Heart left ventricle (tissue), 16 donors: ENCODE measurements at regions of chr2 and their contacts with region 1.

Region 1: DNA sequence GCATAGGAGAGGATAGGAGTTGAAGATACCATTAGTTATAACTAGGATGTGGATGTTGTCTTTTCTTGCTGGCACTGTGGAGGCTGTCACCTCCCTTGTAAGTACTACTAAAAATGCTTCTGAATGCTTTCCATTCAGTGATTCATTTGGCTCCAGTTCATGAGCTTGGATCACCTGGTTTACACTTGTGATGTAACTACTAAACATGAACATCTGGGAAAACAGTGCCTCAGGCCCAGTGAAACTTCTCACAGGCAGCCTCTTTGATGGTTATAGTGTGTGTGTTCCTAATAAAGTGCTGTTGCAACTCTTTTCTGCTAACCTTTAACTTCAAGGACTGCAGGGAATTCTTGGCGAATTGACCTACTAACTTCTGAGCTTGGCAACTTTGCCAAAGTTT is 13.0 kb upstream of the SLC9A2 start:
- DNase-seq: no peak
- ATAC-seq: no peak
- H3K4me3 ChIP-seq: no peak overlapping the region
- H3K27ac ChIP-seq: no peak overlapping the region
- H3K4me1 ChIP-seq: peaks cover 0 to 7% (median 0%) of the 10 kb centered on the region in 12 donors
- H3K27me3 ChIP-seq: peaks cover 0 to 5% (median 0%) of the 10 kb centered on the region in 9 donors
- CTCF ChIP-seq: no peak
- POLR2A ChIP-seq: no peak

Region 2: DNA sequence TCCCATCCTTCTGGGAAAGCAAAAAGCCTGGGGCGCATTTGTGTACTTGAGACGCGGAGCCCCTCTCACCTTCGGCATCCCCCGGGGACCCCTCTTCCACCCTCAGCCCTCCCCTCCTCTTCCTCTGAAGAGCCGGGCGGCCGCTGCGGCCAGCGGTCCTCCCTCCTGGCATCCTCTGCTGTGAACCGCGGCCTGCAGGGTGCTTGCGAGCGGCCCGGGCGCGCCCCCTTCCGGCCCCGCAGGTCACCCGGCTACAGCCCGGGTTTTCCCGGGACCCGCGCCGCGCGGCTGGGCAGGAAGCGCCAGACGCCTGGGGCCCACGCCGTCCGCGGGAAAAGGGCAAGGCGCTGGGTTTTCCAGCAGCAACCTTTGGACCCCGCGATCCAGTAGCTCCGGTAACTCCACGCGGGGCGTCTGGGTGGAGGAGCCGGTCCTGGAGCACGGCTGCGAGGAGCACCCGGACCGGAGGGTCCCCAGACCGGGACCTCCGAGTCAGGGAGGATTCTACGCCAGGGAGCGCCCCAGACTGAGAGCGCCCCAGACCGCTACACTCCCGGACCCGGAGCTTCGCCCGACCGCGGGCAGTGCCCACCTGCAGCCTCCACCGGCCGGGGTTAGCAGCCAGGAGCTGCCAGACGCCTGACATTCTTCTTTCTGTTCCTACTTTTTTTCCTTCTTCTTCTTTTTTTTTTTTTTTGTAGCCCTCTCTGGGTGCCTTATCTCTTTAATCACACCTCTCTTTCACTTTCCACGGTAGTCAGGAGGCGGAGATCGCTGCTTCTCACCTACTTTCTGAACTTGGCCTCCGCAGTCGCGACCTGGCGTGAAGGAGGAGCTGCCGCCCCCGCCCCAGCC is 250.6 kb before region 1 on chr2 and contains the start of gene IL18R1:
- intact Hi-C with region 1: no loop called
- DNase-seq: peak; percentile 79 to 91 (median 84)
- ATAC-seq: peak; percentile 89 to 100 (median 98)
- H3K4me3 ChIP-seq: peak within 1 kb of the TSS; percentile 45 to 82 (median 74)
- H3K27ac ChIP-seq: peak within 1 kb of the TSS in 10 of 12 donors; percentile 12 to 89 (median 66)
- H3K4me1 ChIP-seq: peaks cover 0 to 28% (median 2%) of the 10 kb centered on the region in 12 donors
- H3K27me3 ChIP-seq: peaks cover 0 to 4% (median 0%) of the 10 kb centered on the region in 9 donors
- CTCF ChIP-seq: peak; percentile 76 to 96 (median 86)
- POLR2A ChIP-seq: peak in 1 of 2 donors; percentile 37
- total RNA-seq, gene IL18R1: 0.50 to 4.3 (median 1.8) TPM

Region 3: GRCh38 chr2:102652126-102652525 is 45.8 kb after region 1 on chr2:
- intact Hi-C with region 1: loop called in 1 of 10 experiments (anchors 5 kb)
- DNase-seq: no peak
- ATAC-seq: no peak
- H3K4me3 ChIP-seq: no peak overlapping the region
- H3K27ac ChIP-seq: no peak overlapping the region
- H3K4me1 ChIP-seq: no peaks in the 10 kb centered on the region
- H3K27me3 ChIP-seq: no peaks in the 10 kb centered on the region
- CTCF ChIP-seq: no peak
- POLR2A ChIP-seq: no peak

Region 4: DNA sequence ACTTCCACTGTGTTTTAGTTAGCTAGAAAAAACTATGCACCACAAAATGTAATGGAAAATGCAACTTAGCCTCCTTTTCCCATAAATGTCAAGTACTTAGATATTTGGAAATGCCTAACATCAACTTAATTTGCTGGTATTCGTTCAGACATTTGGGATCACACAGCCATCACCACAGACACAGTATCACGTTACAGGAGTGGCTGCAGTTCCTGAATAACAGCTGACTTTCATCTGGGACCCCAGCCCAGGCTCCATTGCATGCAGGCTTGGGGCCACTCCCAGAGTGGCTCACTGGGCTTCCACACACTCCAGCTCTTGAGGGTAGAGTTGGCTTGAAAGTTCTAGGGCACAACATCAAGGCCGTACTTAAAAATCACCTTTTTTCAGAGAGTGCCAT is 164.8 kb after region 1 on chr2:
- intact Hi-C with region 1: no loop called
- DNase-seq: no peak
- ATAC-seq: peak in 3 of 4 donors; percentile 31 to 58 (median 40)
- H3K4me3 ChIP-seq: no peak overlapping the region
- H3K27ac ChIP-seq: peak overlapping the region in 6 of 12 donors; percentile 7 to 45 (median 32)
- H3K4me1 ChIP-seq: peaks cover 0 to 26% (median 5%) of the 10 kb centered on the region in 12 donors
- H3K27me3 ChIP-seq: no peaks in the 10 kb centered on the region
- CTCF ChIP-seq: no peak
- POLR2A ChIP-seq: no peak

Region 5: DNA sequence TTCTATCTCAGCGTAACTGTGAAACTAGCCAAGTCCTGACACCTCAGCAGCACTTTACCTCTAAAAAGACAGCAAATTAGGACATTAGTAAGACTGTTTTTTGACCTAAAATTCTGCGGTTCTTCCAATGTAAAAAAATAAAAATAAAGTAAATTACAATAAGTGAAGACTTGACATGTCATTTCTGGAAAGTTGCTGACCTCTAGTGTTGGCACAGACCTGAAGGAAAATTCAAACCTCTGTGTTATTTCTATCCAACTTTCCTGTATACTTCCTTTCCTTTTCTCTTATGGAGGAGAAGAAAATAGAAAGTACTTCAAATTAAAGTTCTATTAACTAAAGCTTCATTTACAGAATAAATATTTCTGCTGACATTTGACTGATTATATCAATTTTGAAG is 266.0 kb after region 1 on chr2:
- intact Hi-C with region 1: loop called in 1 of 10 experiments (anchors 5 kb)
- DNase-seq: no peak
- ATAC-seq: no peak
- H3K4me3 ChIP-seq: no peak overlapping the region
- H3K27ac ChIP-seq: no peak overlapping the region
- H3K4me1 ChIP-seq: no peaks in the 10 kb centered on the region
- H3K27me3 ChIP-seq: no peaks in the 10 kb centered on the region
- CTCF ChIP-seq: peak in 8 of 12 donors; percentile 10 to 49 (median 31)
- POLR2A ChIP-seq: no peak